ENCODE measurements at regions of chr16 and their contacts with region 1.

Region 1: GRCh38 chr16:30091474-30092372 is at the start of gene TBX6:
- DNase-seq: peak; percentile 95
- H3K4me3 ChIP-seq: peak within 1 kb of the TSS; percentile 58 to 61
- H3K27ac ChIP-seq: peak within 1 kb of the TSS; percentile 50 to 89; a peak in 3 of 4 replicates
- H3K4me1 ChIP-seq: peaks cover 5 to 34% of the 10 kb centered on the region in 2 experiments; a peak in 2 of 4 replicates
- H3K27me3 ChIP-seq: no peaks in the 10 kb centered on the region
- CTCF ChIP-seq: peak; percentile 58
- EP300 ChIP-seq: no peak; a peak in 1 of 4 replicates
- RAD21 ChIP-seq: peak; percentile 78
- polyA plus RNA-seq, gene TBX6: 0.16 and 0.18 TPM in 2 replicates

Region 2: DNA sequence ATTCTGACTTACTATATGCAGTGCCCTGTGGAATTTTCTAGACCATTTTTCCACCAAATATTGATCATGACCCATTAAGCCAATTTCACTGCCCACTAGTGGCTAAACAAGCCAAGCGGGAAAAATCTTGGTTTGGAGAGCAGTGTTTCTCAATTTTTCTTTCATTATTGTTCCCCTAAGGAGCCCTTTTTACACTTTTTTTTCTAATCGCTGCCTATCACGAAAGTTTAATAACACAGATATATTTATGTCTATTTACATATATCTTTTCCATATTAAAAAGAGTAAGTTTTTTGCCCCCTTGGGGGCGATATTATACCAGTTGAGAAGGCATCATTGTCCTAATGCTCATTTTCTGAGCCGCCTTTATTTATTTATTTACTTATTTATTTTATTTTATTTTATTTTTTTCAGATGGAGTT is 49.9 kb before region 1 on chr16:
- CTCF ChIA-PET with region 1: interaction called, 30 read pairs
- POLR2A ChIA-PET with region 1: no interaction called
- DNase-seq: no peak
- H3K4me3 ChIP-seq: no peak overlapping the region
- H3K27ac ChIP-seq: no peak overlapping the region
- H3K4me1 ChIP-seq: no peaks in the 10 kb centered on the region
- H3K27me3 ChIP-seq: no peaks in the 10 kb centered on the region
- CTCF ChIP-seq: peak; percentile 69
- EP300 ChIP-seq: no peak
- RAD21 ChIP-seq: peak; percentile 71

Region 3: DNA sequence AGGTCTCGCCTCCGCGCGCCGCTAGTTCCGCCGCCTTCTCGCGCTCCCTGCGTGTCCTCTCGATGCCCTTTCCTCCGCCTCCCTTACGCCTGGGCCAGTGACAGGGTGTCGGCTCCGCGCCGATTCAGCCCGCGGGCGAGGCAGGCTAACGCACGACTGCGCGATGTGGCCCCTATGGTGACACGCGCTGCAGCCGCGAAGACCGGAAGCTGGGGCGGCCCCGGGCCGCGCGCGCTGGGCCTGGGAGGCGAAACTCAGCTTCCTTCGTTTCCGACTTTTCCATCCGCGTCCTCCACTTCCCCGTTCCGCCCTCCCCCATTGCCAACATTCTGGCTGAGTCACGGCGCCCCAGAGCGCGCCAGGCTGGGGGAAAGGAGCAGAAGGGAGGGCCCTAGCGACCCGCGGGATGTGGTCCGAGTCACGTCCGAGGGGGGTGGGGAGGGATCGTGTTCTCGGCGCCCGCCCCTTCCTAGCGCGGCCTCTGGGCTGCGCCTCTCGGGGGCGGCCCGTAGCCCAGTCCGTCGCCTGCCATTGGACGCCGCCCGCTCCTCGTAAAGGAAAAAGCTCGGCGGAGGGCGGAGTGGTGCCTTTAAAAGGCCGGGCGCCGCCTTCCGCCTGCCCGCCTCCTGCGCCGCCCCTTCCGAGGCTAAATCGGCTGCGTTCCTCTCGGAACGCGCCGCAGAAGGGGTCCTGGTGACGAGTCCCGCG is 26.4 kb before region 1 on chr16 and contains the start of gene ALDOA:
- CTCF ChIA-PET with region 1: interaction called, 68 read pairs
- POLR2A ChIA-PET with region 1: interaction called, 57 read pairs
- DNase-seq: peak; percentile 96
- H3K4me3 ChIP-seq: peak within 1 kb of the TSS; percentile 92 to 98
- H3K27ac ChIP-seq: peak within 1 kb of the TSS; percentile 98 to 99
- H3K4me1 ChIP-seq: peaks cover 39 to 45% of the 10 kb centered on the region in 2 experiments
- H3K27me3 ChIP-seq: no peaks in the 10 kb centered on the region
- CTCF ChIP-seq: no peak
- EP300 ChIP-seq: peak; percentile 28 to 62; a peak in 2 of 4 replicates
- RAD21 ChIP-seq: no peak
- polyA plus RNA-seq, gene ALDOA: 437 and 641 TPM in 2 replicates

Region 4: GRCh38 chr16:30104494-30104968 is 12.8 kb after region 1 on chr16:
- CTCF ChIA-PET with region 1: interaction called, 49 read pairs
- POLR2A ChIA-PET with region 1: no interaction called
- DNase-seq: no peak
- H3K4me3 ChIP-seq: no peak overlapping the region
- H3K27ac ChIP-seq: no peak overlapping the region
- H3K4me1 ChIP-seq: no peaks in the 10 kb centered on the region
- H3K27me3 ChIP-seq: no peaks in the 10 kb centered on the region
- CTCF ChIP-seq: no peak
- EP300 ChIP-seq: no peak
- RAD21 ChIP-seq: no peak

Region 5: GRCh38 chr16:30122604-30123160 is 31.0 kb after region 1 on chr16:
- CTCF ChIA-PET with region 1: interaction called, 11 read pairs
- POLR2A ChIA-PET with region 1: no interaction called
- DNase-seq: no peak
- H3K4me3 ChIP-seq: peak overlapping the region; percentile 65 to 70
- H3K27ac ChIP-seq: peak overlapping the region in 1 of 2 experiments; percentile 54; a peak in 1 of 4 replicates
- H3K4me1 ChIP-seq: peaks cover 9 to 11% of the 10 kb centered on the region in 2 experiments; a peak in 3 of 4 replicates
- H3K27me3 ChIP-seq: no peaks in the 10 kb centered on the region
- CTCF ChIP-seq: no peak
- EP300 ChIP-seq: no peak
- RAD21 ChIP-seq: no peak

Region 6: DNA sequence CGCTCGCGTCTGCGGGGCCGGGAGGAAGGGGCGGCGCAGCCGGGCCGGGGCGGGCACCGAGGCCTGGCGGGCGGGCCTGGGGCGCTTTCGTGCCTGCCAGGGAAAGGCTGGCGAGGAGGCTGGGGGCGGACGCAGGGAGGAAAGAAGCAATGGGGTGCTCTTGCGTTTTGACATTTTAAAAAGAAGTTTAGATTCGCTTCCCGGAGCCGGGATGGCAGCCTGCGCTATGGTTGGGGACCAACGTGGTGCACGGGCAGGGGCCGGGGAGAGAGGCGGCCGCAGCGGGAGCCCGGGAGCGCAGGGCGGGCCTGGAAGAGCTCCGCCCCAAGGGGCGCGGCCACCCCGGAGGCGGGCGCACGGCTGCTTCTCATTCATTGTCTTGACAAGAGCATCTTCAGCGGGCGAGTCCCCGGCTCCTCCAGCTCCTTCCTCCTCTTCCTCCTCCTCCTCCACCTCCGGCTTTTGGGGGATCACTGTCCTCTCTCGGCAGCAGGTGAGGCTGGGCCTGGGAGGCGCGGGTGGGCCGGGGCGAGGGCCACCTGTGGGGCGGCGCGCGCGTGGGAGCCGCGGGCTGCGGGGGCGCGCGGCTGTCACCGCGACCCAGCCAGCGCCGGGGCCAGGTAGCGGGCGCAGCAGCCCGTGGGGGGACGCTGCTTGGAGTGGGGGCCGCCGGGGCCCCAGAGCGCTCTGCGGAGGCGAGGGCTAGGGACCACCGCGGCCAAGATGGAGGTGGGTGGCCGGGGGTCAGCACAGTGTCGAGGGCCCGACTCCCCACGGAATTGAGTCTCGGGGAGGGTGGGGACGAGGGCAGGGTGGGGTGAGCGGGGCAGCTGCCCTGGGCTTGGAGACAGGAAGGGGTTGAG is 91.7 kb after region 1 on chr16 and contains the start of gene CORO1A:
- CTCF ChIA-PET with region 1: interaction called, 33 read pairs
- POLR2A ChIA-PET with region 1: no interaction called
- DNase-seq: peak; percentile 95
- H3K4me3 ChIP-seq: peak within 1 kb of the TSS; percentile 62 to 66
- H3K27ac ChIP-seq: peak within 1 kb of the TSS in 1 of 2 experiments; percentile 29; a peak in 2 of 4 replicates
- H3K4me1 ChIP-seq: peaks cover 0 to 25% of the 10 kb centered on the region in 2 experiments; a peak in 1 of 4 replicates
- H3K27me3 ChIP-seq: no peaks in the 10 kb centered on the region
- CTCF ChIP-seq: no peak
- EP300 ChIP-seq: no peak
- RAD21 ChIP-seq: no peak
- polyA plus RNA-seq, gene CORO1A: 13.0 and 13.5 TPM in 2 replicates

Measured in SK-N-SH (cell line).